Naive thymus-derived CD4-positive, alpha-beta T cell (primary cell): ENCODE measurements at regions of chr7 and their contacts with region 1.

Region 1: GRCh38 chr7:116236020-116236630 is 25.8 kb downstream of the TES start:
- DNase-seq: peak in 7 of 9 donors; percentile 40 to 69 (median 61)
- ATAC-seq: peak; percentile 83
- H3K4me3 ChIP-seq: no peak overlapping the region
- H3K4me3 Mint-ChIP-seq: peak overlapping the region in 4 of 10 donors; percentile 21 to 52 (median 28)
- H3K27ac ChIP-seq: no peak overlapping the region
- H3K27ac Mint-ChIP-seq: peak overlapping the region in 6 of 9 donors; percentile 41 to 80 (median 52)
- H3K4me1 ChIP-seq: peaks cover 20 to 32% of the 10 kb centered on the region in 2 donors
- H3K4me1 Mint-ChIP-seq: peaks cover 29 to 92% (median 66%) of the 10 kb centered on the region in 7 donors
- H3K27me3 ChIP-seq: no peaks in the 10 kb centered on the region
- H3K27me3 Mint-ChIP-seq: no peaks in the 10 kb centered on the region

Region 2: GRCh38 chr7:116173051-116174028 is 62.8 kb before region 1 on chr7:
- CTCF ChIA-PET with region 1: interaction called, 303 read pairs
- POLR2A ChIA-PET with region 1: interaction called, 5 read pairs
- intact Hi-C with region 1: no loop called
- DNase-seq: peak in 7 of 9 donors; percentile 27 to 69 (median 56)
- ATAC-seq: peak; percentile 74
- H3K4me3 ChIP-seq: no peak overlapping the region
- H3K4me3 Mint-ChIP-seq: no peak overlapping the region
- H3K27ac ChIP-seq: no peak overlapping the region
- H3K27ac Mint-ChIP-seq: no peak overlapping the region
- H3K4me1 ChIP-seq: no peaks in the 10 kb centered on the region
- H3K4me1 Mint-ChIP-seq: peaks cover 0 to 8% (median 0%) of the 10 kb centered on the region in 7 donors
- H3K27me3 ChIP-seq: no peaks in the 10 kb centered on the region
- H3K27me3 Mint-ChIP-seq: peaks cover 5 to 42% (median 8%) of the 10 kb centered on the region in 5 donors

Region 3: GRCh38 chr7:116195451-116195850 is 40.7 kb before region 1 on chr7:
- CTCF ChIA-PET with region 1: interaction called, 13 read pairs
- POLR2A ChIA-PET with region 1: no interaction called
- intact Hi-C with region 1: loop called in 1 of 2 experiments (anchors 5 kb)
- DNase-seq: no peak
- ATAC-seq: no peak
- H3K4me3 ChIP-seq: no peak overlapping the region
- H3K4me3 Mint-ChIP-seq: no peak overlapping the region
- H3K27ac ChIP-seq: no peak overlapping the region
- H3K27ac Mint-ChIP-seq: no peak overlapping the region
- H3K4me1 ChIP-seq: no peaks in the 10 kb centered on the region
- H3K4me1 Mint-ChIP-seq: no peaks in the 10 kb centered on the region
- H3K27me3 ChIP-seq: no peaks in the 10 kb centered on the region
- H3K27me3 Mint-ChIP-seq: peaks cover 0 to 43% (median 0%) of the 10 kb centered on the region in 5 donors

Region 4: DNA sequence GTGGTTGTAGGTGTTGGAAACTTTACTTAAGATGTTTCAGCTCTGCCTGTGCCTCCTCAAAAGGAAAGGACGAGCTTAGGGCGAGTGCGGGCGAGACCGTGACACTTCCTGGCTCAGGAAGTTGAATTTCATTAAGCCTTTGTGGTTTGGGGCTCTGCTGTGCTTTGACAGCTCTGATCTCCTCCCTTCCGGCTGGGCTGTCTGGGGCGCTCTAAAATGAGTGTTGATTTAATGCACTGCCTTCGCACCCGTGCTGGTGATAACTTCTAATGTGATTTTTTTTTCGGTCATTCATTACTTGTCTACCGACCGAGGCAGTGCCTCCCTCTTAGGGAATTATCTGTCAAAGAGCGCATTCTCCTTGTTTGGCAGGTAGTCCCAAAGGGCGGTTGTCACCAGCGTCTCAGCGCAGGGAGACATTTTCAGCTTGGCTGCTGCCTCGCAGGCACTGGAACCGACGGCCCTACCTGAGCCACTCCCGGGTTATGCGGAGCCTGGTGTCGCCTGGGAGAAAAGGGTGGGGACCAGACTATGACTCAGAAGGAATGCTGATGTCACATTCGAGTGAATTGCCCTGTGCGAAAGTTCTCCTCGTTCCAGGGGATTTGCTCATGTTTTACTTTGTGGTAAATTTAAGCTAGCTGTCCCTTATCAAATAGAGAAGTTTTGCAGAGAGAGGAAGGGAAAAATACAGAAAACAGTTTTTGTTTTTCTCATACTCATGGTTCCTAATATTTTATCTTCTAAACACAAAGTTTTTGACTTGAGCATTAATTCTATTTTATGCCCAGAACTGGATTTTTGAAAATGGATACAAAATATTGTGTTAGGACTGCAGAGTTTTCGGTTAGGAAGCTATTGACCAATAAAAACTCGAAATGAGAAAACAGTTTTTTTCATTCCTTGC is 24.9 kb before region 1 on chr7:
- CTCF ChIA-PET with region 1: interaction called, 66 read pairs
- POLR2A ChIA-PET with region 1: interaction called, 43 read pairs
- intact Hi-C with region 1: loop called (anchors 1 kb)
- DNase-seq: peak; percentile 54 to 89 (median 84)
- ATAC-seq: peak; percentile 87
- H3K4me3 ChIP-seq: peak overlapping the region; percentile 92
- H3K4me3 Mint-ChIP-seq: peak overlapping the region; percentile 84 to 99 (median 98)
- H3K27ac ChIP-seq: peak overlapping the region; percentile 93
- H3K27ac Mint-ChIP-seq: peak overlapping the region; percentile 94 to 99 (median 97)
- H3K4me1 ChIP-seq: peaks cover 28 to 42% of the 10 kb centered on the region in 2 donors
- H3K4me1 Mint-ChIP-seq: peaks cover 43 to 71% (median 59%) of the 10 kb centered on the region in 7 donors
- H3K27me3 ChIP-seq: no peaks in the 10 kb centered on the region
- H3K27me3 Mint-ChIP-seq: no peaks in the 10 kb centered on the region

Region 5: DNA sequence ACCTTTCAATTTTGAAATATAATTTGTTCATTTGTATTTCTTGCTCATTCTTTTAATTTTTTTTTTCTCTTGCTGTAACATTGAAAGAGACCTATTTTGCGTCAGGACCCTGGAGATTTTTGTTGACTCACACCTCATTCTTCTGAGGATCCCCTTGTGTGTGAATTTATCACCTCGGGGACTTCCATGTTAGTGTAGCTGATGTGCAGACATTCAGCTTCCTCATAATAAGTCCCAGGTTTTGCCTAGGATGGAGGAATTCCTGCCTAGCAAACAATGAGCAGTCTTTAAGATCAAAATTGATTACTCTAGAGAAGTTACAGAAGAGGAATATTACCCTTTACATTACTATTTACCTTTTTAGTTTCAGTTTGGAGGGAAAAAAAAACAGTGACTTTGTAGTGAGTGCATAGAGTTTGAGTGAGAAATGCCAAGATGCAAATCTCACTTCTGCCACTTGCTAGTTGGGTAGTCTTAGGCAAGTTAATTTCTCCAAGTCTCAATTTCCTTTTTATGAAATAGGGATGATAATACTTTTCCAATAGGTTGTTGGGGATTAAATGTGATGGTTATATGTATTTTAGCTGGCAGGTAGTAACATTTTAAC is 11.5 kb before region 1 on chr7:
- CTCF ChIA-PET with region 1: interaction called, 55 read pairs
- POLR2A ChIA-PET with region 1: interaction called, 4 read pairs
- intact Hi-C with region 1: loop called in 1 of 2 experiments (anchors 1 kb)
- DNase-seq: peak in 2 of 9 donors; percentile 25 to 28
- ATAC-seq: peak; percentile 69
- H3K4me3 ChIP-seq: peak overlapping the region; percentile 5
- H3K4me3 Mint-ChIP-seq: peak overlapping the region; percentile 1 to 79 (median 68)
- H3K27ac ChIP-seq: peak overlapping the region; percentile 23
- H3K27ac Mint-ChIP-seq: peak overlapping the region; percentile 64 to 85 (median 71)
- H3K4me1 ChIP-seq: peaks cover 69 to 70% of the 10 kb centered on the region in 2 donors
- H3K4me1 Mint-ChIP-seq: peaks cover 66 to 96% (median 88%) of the 10 kb centered on the region in 7 donors
- H3K27me3 ChIP-seq: no peaks in the 10 kb centered on the region
- H3K27me3 Mint-ChIP-seq: no peaks in the 10 kb centered on the region

Region 6: DNA sequence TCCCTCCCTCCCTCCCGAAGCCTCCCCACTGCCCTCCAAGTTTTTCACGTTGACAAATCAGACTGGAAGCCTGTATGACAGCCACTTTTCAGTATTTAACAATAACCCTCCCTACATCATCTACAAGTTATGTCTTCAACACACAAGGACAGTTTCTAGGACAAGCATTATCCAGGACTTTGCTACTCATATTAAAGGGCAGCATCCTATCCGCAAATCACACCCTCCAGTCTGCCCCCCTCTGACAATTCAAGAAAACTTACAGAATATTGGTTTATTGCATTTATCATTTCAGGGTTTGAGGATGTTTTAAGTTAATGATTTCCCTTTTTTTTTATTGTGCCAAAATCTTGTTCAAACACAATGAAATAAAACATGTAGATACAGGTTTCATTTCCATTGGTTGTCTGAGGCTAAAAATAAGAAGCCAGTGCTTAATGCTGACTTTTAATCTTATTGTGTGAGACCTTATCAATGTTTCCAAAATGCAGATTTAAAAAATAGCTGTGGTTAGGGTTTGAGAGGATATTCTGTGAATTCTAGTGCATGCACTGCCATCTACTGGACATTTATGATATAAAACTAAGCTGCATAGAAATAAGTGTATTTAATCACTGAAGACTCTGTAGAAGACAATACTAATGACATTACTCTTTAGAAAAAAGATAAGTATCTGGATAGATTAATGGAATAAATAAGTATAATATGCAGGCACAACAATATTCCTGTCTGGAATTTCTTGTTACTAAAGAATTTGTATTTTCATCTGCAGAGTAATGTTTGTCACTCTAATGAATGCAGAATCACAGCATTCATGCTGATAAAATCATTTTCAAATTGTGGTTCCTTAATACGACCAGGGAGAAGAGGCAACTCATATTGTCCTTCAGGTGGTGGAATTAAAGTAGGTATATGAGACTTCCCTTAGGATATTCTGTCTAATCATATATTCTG is 352.8 kb after region 1 on chr7:
- CTCF ChIA-PET with region 1: interaction called, 5 read pairs
- POLR2A ChIA-PET with region 1: no interaction called
- intact Hi-C with region 1: loop called in 1 of 2 experiments (anchors 1 kb)
- DNase-seq: peak in 5 of 9 donors; percentile 22 to 40 (median 32)
- ATAC-seq: peak; percentile 69
- H3K4me3 ChIP-seq: no peak overlapping the region
- H3K4me3 Mint-ChIP-seq: no peak overlapping the region
- H3K27ac ChIP-seq: no peak overlapping the region
- H3K27ac Mint-ChIP-seq: no peak overlapping the region
- H3K4me1 ChIP-seq: no peaks in the 10 kb centered on the region
- H3K4me1 Mint-ChIP-seq: peaks cover 15 to 27% (median 19%) of the 10 kb centered on the region in 7 donors
- H3K27me3 ChIP-seq: no peaks in the 10 kb centered on the region
- H3K27me3 Mint-ChIP-seq: peaks cover 22 to 32% (median 26%) of the 10 kb centered on the region in 5 donors

Region 7: GRCh38 chr7:116815041-116815440 is 578.9 kb after region 1 on chr7:
- CTCF ChIA-PET with region 1: no interaction called
- POLR2A ChIA-PET with region 1: no interaction called
- intact Hi-C with region 1: no loop called
- DNase-seq: no peak
- ATAC-seq: no peak
- H3K4me3 ChIP-seq: no peak overlapping the region
- H3K4me3 Mint-ChIP-seq: no peak overlapping the region
- H3K27ac ChIP-seq: no peak overlapping the region
- H3K27ac Mint-ChIP-seq: no peak overlapping the region
- H3K4me1 ChIP-seq: no peaks in the 10 kb centered on the region
- H3K4me1 Mint-ChIP-seq: peaks cover 0 to 2% (median 0%) of the 10 kb centered on the region in 7 donors
- H3K27me3 ChIP-seq: no peaks in the 10 kb centered on the region
- H3K27me3 Mint-ChIP-seq: peaks cover 4 to 32% (median 5%) of the 10 kb centered on the region in 5 donors

Region 8: GRCh38 chr7:117127585-117128168 is 891.6 kb after region 1 on chr7:
- CTCF ChIA-PET with region 1: no interaction called
- POLR2A ChIA-PET with region 1: no interaction called
- intact Hi-C with region 1: loop called in 1 of 2 experiments (anchors 5 kb)
- DNase-seq: peak in 8 of 9 donors; percentile 9 to 53 (median 44)
- ATAC-seq: peak; percentile 76
- H3K4me3 ChIP-seq: no peak overlapping the region
- H3K4me3 Mint-ChIP-seq: no peak overlapping the region
- H3K27ac ChIP-seq: no peak overlapping the region
- H3K27ac Mint-ChIP-seq: no peak overlapping the region
- H3K4me1 ChIP-seq: no peaks in the 10 kb centered on the region
- H3K4me1 Mint-ChIP-seq: no peaks in the 10 kb centered on the region
- H3K27me3 ChIP-seq: no peaks in the 10 kb centered on the region
- H3K27me3 Mint-ChIP-seq: peaks cover 0 to 11% (median 0%) of the 10 kb centered on the region in 5 donors